ENCODE measurements at regions of chr3 and their contacts with region 1.

Region 1: GRCh38 chr3:132180337-132180791 is 136.8 kb upstream of the ACP3 start:
- DNase-seq: peak; percentile 66
- ATAC-seq: peak; percentile 87
- H3K4me3 ChIP-seq: no peak overlapping the region
- H3K27ac ChIP-seq: no peak overlapping the region
- H3K4me1 ChIP-seq: no peaks in the 10 kb centered on the region
- H3K27me3 ChIP-seq: peaks cover 4% of the 10 kb centered on the region
- CTCF ChIP-seq: peak; percentile 77
- POLR2A ChIP-seq: no peak
- RAD21 ChIP-seq: peak; percentile 88

Region 2: GRCh38 chr3:132006605-132007204 is 173.7 kb before region 1 on chr3:
- CTCF ChIA-PET with region 1: no interaction called
- POLR2A ChIA-PET with region 1: no interaction called
- dilution Hi-C with region 1: no loop called
- in situ Hi-C with region 1: no loop called
- intact Hi-C with region 1: loop called (anchors 1 kb)
- DNase-seq: peak; percentile 24
- ATAC-seq: peak; percentile 74
- H3K4me3 ChIP-seq: no peak overlapping the region
- H3K27ac ChIP-seq: no peak overlapping the region
- H3K4me1 ChIP-seq: no peaks in the 10 kb centered on the region
- H3K27me3 ChIP-seq: no peaks in the 10 kb centered on the region
- CTCF ChIP-seq: peak; percentile 56
- POLR2A ChIP-seq: no peak
- RAD21 ChIP-seq: peak; percentile 34; the same call in 1 of the 2 replicates

Region 3: DNA sequence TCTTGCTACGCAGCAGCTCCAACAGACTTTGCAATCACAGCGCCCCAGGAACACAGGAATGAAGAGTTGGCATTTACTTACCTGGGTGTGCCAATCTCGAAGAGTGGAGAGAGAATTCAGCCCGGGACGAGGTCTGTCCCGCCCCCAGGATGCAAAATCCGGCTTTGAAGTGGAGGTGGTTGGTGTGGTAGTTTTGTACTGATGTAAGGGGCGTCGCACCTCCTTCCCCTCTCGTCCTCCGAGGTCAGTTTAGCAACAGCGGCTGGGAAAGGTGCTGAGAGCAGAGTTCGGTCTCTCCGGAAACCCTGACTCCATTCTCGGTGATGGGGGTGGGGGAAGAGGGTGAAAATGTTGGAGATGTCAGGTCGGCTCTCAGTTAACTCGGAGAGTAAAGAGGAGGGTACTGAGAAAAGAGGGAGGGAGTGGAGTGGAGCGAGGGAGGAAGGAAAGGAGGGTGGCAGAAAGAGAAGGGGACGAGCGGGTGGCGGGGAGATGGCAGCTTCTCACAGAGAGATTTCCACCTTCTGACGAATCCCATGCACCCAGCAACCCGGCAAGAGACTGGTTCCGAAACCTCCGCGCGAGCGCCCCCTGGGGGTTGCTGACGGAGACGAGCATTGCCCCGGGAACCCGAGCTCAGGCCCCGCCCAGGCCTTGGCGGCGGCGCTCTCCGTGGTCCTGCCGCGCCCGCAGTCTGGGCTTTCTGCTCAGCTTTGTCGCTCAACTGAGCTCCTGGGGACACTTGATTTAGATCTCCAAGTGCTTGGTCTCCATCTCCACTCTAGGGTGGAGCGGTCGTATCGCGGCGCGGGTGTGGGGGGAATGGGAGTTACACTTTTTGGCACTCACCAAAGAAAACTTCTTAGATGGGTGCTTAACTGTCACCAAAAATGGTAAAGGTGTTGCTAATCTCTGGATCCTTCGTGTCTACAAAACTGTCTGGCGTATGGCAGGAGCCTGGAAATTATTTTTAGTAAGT is 145.6 kb before region 1 on chr3 and contains the start of gene CPNE4:
- CTCF ChIA-PET with region 1: interaction called, 41 read pairs
- POLR2A ChIA-PET with region 1: no interaction called
- dilution Hi-C with region 1: no loop called
- in situ Hi-C with region 1: loop called (anchors 5 kb)
- intact Hi-C with region 1: loop called (anchors 1 kb)
- DNase-seq: peak; percentile 51
- ATAC-seq: peak; percentile 99
- H3K4me3 ChIP-seq: no peak within 1 kb of the TSS
- H3K27ac ChIP-seq: no peak within 1 kb of the TSS
- H3K4me1 ChIP-seq: no peaks in the 10 kb centered on the region
- H3K27me3 ChIP-seq: peaks cover 19% of the 10 kb centered on the region
- CTCF ChIP-seq: peak; percentile 84
- POLR2A ChIP-seq: no peak
- RAD21 ChIP-seq: peak; percentile 36; the same call in 1 of the 2 replicates
- total RNA-seq, gene CPNE4: not detected in 2 replicates